ENCODE measurements at regions of chr1 and their contacts with region 1.

Region 1: DNA sequence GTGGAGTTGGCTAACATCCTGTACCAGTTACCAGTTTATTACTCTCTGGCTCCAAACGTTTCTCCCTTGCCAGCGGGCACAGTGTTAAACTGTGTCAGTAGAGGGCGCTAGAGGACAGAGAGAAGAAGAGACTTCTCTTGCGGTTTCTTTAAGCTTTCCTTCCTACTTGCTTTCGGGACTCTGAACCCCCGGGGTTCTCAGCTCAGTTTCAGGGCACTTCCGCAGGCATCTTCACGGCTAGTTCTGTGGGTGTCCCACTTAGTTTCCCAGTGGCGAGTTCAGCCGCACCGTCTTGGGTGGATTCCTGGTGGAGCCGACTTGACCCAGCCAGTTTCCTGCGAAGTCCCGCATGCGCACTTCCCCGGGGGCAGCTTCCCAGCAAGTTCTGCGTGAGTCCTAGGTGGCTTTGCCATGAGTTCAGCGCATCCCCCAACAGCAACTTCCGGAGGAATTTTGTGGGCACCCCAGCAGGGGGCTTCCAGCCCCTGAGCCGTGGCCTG is 37.9 kb upstream of the BTG2 start:
- DNase-seq: peak; percentile 98
- H3K4me3 Mint-ChIP-seq: peak overlapping the region; percentile 77
- H3K27ac Mint-ChIP-seq: no peak overlapping the region
- H3K4me1 Mint-ChIP-seq: peaks cover 12% of the 10 kb centered on the region
- H3K27me3 Mint-ChIP-seq: peaks cover 14% of the 10 kb centered on the region
- CTCF ChIP-seq: peak; percentile 99

Region 2: DNA sequence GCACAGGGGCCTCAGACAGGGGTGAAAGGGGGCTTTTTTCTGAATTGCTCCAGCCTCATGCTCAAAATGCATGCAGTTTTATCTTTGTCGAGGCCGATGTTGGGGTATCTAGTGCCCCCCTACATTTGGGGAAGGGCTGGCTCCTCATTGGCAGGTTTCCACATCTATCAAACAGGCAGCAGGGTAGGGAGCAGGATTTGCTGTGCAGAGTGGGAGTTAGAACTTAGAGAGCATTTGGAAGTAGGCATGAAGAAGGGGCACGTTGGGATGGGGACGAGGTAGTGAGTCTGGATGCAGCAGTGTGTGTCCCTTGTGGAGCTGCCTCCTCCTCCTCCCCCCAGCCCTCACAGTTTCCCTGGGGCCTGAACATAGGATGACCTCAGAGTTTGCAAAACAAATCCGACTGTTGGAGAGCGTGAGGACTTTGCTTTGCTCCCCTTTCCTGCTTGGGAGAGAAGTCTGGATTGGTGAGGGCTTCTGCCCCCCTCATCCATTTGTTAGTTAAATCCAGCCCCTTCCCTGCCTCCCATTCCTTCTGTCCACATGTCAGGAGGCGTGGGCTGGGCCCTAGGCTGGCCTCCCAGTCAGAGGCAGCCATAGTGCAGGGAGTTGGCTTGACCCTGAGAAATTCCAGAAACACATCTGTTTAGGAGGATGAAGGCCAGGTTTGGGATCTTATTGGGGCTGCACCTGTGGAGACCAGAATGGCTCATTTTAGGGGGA is 1181.6 kb before region 1 on chr1:
- CTCF ChIA-PET with region 1: no interaction called
- POLR2A ChIA-PET with region 1: no interaction called
- intact Hi-C with region 1: no loop called
- DNase-seq: no peak
- H3K4me3 Mint-ChIP-seq: no peak overlapping the region
- H3K27ac Mint-ChIP-seq: no peak overlapping the region
- H3K4me1 Mint-ChIP-seq: peaks cover 14% of the 10 kb centered on the region
- H3K27me3 Mint-ChIP-seq: peaks cover 4% of the 10 kb centered on the region
- CTCF ChIP-seq: no peak

Region 3: GRCh38 chr1:203026031-203026989 is 241.1 kb before region 1 on chr1 and contains the start of gene PPFIA4:
- CTCF ChIA-PET with region 1: interaction called, 17 read pairs
- POLR2A ChIA-PET with region 1: interaction called, 3 read pairs
- intact Hi-C with region 1: no loop called
- DNase-seq: peak; percentile 93
- H3K4me3 Mint-ChIP-seq: peak within 1 kb of the TSS; percentile 68
- H3K27ac Mint-ChIP-seq: peak within 1 kb of the TSS; percentile 63
- H3K4me1 Mint-ChIP-seq: peaks cover 8% of the 10 kb centered on the region
- H3K27me3 Mint-ChIP-seq: peaks cover 11% of the 10 kb centered on the region
- CTCF ChIP-seq: no peak
- total RNA-seq, gene PPFIA4: 0.16 and 0.49 TPM in 2 replicates

Region 4: DNA sequence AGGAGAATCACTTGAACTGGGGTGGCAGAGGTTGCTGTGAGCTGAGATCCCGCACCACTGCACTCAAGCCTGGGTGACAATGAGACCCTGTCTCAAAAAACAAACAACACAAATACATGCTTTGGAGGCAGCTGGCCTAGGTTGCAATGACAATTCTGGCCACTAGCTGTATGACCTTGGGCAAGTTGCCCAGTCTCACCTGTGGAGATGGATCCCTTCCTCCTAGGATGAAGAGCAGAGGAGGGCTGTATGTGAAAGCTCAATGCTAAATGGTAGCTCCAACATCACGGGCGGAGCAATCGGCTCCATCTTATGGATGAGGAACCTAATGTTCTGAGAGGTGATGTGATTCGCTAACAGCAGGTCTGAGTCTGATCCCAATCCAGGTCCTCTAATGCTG is 119.3 kb before region 1 on chr1:
- CTCF ChIA-PET with region 1: interaction called, 16 read pairs
- POLR2A ChIA-PET with region 1: interaction called, 5 read pairs
- intact Hi-C with region 1: no loop called
- DNase-seq: peak; percentile 68
- H3K4me3 Mint-ChIP-seq: no peak overlapping the region
- H3K27ac Mint-ChIP-seq: no peak overlapping the region
- H3K4me1 Mint-ChIP-seq: peaks cover 16% of the 10 kb centered on the region
- H3K27me3 Mint-ChIP-seq: no peaks in the 10 kb centered on the region
- CTCF ChIP-seq: peak; percentile 70

Region 5: GRCh38 chr1:203239526-203240305 is 27.7 kb before region 1 on chr1:
- CTCF ChIA-PET with region 1: interaction called, 27 read pairs
- POLR2A ChIA-PET with region 1: no interaction called
- intact Hi-C with region 1: no loop called
- DNase-seq: no peak
- H3K4me3 Mint-ChIP-seq: no peak overlapping the region
- H3K27ac Mint-ChIP-seq: no peak overlapping the region
- H3K4me1 Mint-ChIP-seq: no peaks in the 10 kb centered on the region
- H3K27me3 Mint-ChIP-seq: peaks cover 53% of the 10 kb centered on the region
- CTCF ChIP-seq: no peak

Region 6: GRCh38 chr1:203326830-203327683 is 59.7 kb after region 1 on chr1:
- CTCF ChIA-PET with region 1: interaction called, 980 read pairs
- POLR2A ChIA-PET with region 1: interaction called, 15 read pairs
- intact Hi-C with region 1: no loop called
- DNase-seq: peak; percentile 97
- H3K4me3 Mint-ChIP-seq: peak overlapping the region; percentile 71
- H3K27ac Mint-ChIP-seq: peak overlapping the region; percentile 57
- H3K4me1 Mint-ChIP-seq: peaks cover 32% of the 10 kb centered on the region
- H3K27me3 Mint-ChIP-seq: peaks cover 16% of the 10 kb centered on the region
- CTCF ChIP-seq: no peak

Region 7: GRCh38 chr1:203504397-203505250 is 237.2 kb after region 1 on chr1:
- CTCF ChIA-PET with region 1: interaction called, 14 read pairs
- POLR2A ChIA-PET with region 1: no interaction called
- intact Hi-C with region 1: no loop called
- DNase-seq: peak; percentile 96
- H3K4me3 Mint-ChIP-seq: no peak overlapping the region
- H3K27ac Mint-ChIP-seq: no peak overlapping the region
- H3K4me1 Mint-ChIP-seq: peaks cover 22% of the 10 kb centered on the region
- H3K27me3 Mint-ChIP-seq: peaks cover 22% of the 10 kb centered on the region
- CTCF ChIP-seq: peak; percentile 94

Region 8: GRCh38 chr1:204065174-204065985 is 798.0 kb after region 1 on chr1:
- CTCF ChIA-PET with region 1: no interaction called
- POLR2A ChIA-PET with region 1: no interaction called
- intact Hi-C with region 1: no loop called
- DNase-seq: peak; percentile 60
- H3K4me3 Mint-ChIP-seq: no peak overlapping the region
- H3K27ac Mint-ChIP-seq: no peak overlapping the region
- H3K4me1 Mint-ChIP-seq: no peaks in the 10 kb centered on the region
- H3K27me3 Mint-ChIP-seq: no peaks in the 10 kb centered on the region
- CTCF ChIP-seq: no peak